ENCODE measurements at regions of chr13 and their contacts with region 1.

Region 1: GRCh38 chr13:21476893-21477472 is 17.9 kb upstream of the ZDHHC20 start:
- DNase-seq: peak; percentile 90
- ATAC-seq: peak; percentile 95
- H3K4me3 Mint-ChIP-seq: peak overlapping the region; percentile 79
- H3K27ac Mint-ChIP-seq: peak overlapping the region; percentile 79
- H3K4me1 Mint-ChIP-seq: peaks cover 7% of the 10 kb centered on the region
- H3K27me3 Mint-ChIP-seq: no peaks in the 10 kb centered on the region
- CTCF ChIP-seq: peak; percentile 92

Region 2: DNA sequence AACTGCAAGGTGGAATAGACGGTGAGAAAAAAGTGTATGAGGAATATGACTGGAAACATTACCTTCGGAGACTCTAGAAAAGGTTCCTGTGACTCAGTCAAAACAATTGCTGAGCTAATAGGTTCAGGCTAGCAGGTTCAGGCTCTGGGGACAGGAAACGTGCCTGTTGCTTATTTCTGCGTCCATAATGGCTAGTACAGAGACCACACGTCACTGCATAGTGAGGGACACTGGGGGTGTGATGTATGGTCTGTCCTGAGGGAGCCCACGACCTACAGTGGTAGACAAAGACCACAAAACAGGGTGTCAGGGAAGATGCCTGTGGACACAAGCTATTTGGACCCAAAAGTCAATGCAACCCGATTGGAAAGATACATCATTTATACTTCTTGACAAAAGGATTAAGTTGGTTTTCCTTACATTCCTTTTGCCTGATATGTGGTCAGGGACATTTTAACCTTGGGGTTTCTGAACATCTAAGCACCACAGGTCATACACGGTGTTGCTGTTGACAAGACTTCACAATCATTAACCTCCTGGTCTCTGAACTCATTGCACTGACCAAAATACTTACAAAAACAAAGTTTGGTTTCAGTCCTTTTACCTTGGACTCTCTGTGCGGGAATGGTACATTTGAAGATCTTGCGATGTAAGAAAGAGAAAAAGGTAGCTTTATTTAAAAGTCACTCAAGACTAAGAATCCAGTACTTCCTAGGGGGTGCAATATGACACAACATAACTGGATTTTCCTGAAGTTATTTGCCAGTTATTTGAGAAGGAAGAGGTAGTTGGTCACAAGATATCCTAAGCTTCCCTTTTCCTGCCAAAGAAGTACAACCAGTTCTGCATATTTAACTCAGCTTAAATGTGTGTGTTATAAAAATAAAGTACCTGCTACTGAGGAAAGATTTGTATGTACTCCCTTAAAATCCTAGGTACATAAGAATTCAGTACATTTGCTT is 971.3 kb before region 1 on chr13:
- CTCF ChIA-PET with region 1: no interaction called
- POLR2A ChIA-PET with region 1: no interaction called
- intact Hi-C with region 1: no loop called
- DNase-seq: no peak
- ATAC-seq: no peak
- H3K4me3 Mint-ChIP-seq: no peak overlapping the region
- H3K27ac Mint-ChIP-seq: no peak overlapping the region
- H3K4me1 Mint-ChIP-seq: no peaks in the 10 kb centered on the region
- H3K27me3 Mint-ChIP-seq: no peaks in the 10 kb centered on the region
- CTCF ChIP-seq: no peak

Region 3: DNA sequence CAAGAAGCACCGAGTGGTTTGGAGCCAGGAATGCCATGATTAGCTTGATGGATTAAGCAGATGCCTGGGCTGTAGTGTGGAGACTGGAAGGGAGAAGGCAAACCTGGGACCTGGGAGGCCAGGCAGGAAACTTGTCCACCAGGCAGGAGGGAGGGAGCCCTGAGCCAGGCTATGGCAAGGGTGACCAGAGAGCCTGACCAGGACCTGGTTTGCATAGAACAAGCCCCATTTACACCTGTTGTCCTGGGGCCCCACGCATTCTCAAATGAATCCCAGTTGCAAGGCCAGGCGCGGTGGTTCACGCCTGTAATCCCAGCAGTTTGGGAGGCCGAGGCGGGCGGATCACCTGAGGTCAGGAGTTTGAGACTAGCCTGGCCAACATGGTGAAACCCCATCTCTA is 365.4 kb before region 1 on chr13:
- CTCF ChIA-PET with region 1: interaction called, 4 read pairs
- POLR2A ChIA-PET with region 1: no interaction called
- intact Hi-C with region 1: loop called (anchors 5 kb)
- DNase-seq: no peak
- ATAC-seq: no peak
- H3K4me3 Mint-ChIP-seq: no peak overlapping the region
- H3K27ac Mint-ChIP-seq: no peak overlapping the region
- H3K4me1 Mint-ChIP-seq: no peaks in the 10 kb centered on the region
- H3K27me3 Mint-ChIP-seq: no peaks in the 10 kb centered on the region
- CTCF ChIP-seq: no peak

Region 4: DNA sequence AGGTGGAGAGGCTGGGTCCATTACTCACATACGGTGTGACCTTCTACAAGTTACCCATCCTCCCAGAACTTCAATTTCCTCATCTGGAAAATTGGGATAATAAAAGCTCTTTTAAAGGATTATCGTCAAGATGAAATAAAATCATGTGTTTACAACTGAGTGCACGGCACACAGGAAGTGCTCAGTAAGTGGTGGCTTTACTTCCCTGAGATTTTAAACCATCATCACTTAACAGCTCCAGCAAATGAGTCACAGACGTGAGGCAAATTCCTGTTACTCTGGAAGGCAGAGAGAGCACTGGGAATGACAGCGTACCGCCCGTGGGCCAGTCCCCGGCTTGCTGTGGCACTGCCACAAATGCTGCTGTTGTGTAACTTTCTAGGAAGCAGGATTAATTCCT is 236.4 kb before region 1 on chr13:
- CTCF ChIA-PET with region 1: interaction called, 10 read pairs
- POLR2A ChIA-PET with region 1: no interaction called
- intact Hi-C with region 1: no loop called
- DNase-seq: no peak
- ATAC-seq: no peak
- H3K4me3 Mint-ChIP-seq: no peak overlapping the region
- H3K27ac Mint-ChIP-seq: no peak overlapping the region
- H3K4me1 Mint-ChIP-seq: peaks cover 7% of the 10 kb centered on the region
- H3K27me3 Mint-ChIP-seq: no peaks in the 10 kb centered on the region
- CTCF ChIP-seq: no peak

Region 5: DNA sequence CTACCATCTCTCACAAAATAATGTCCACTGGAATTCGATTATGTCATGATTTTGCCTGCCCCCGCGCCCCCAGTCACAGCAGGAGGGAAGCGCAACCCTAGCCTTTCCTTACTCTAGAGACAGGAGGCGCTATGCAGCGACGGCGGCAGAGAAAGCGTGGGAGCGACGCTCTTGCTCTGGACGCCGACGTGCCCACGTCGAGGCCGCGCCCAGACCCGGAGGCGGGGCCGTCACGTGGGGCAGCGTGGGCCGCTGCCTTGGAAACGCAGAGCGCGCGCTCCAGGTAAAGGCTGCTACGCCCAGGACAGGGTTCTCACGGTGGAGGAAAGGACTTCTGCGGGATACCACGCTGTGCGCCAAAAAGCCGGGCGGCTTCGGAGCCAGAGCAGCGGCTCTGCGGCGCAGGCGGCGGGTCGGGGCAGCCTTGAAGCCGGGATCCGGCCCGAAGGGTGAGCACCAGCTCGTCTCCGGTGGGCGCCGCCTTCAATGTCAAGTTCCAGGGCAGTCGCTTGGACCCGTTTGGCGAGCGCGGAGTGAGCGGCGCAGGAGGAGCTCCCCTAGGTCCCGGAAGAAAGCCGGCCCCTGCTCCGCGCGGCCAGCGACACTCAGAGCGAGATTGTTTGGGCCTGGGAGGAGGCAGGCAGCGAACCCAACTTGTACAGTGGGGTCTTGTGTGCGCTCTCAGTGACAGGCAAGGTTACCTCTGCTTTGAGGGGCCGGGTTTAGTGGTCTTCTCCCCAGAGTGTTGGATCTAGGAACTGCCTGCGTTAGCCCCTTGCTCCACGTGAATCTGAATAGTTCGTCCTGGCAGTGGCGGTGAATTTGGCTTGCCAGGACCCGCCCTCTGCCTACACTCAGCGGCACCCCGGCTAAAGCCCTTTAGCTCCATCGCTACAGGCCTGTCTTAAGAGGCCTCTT is 178.8 kb before region 1 on chr13:
- CTCF ChIA-PET with region 1: interaction called, 95 read pairs
- POLR2A ChIA-PET with region 1: interaction called, 5 read pairs
- intact Hi-C with region 1: loop called (anchors 2 kb)
- DNase-seq: peak; percentile 87
- ATAC-seq: peak; percentile 93
- H3K4me3 Mint-ChIP-seq: peak overlapping the region; percentile 90
- H3K27ac Mint-ChIP-seq: peak overlapping the region; percentile 61
- H3K4me1 Mint-ChIP-seq: peaks cover 23% of the 10 kb centered on the region
- H3K27me3 Mint-ChIP-seq: no peaks in the 10 kb centered on the region
- CTCF ChIP-seq: peak; percentile 90

Region 6: GRCh38 chr13:21458813-21459701 is 17.9 kb before region 1 on chr13 and contains the start of gene ZDHHC20:
- CTCF ChIA-PET with region 1: interaction called, 50 read pairs
- POLR2A ChIA-PET with region 1: interaction called, 3 read pairs
- intact Hi-C with region 1: no loop called
- DNase-seq: peak; percentile 87
- ATAC-seq: peak; percentile 92
- H3K4me3 Mint-ChIP-seq: peak within 1 kb of the TSS; percentile 96
- H3K27ac Mint-ChIP-seq: peak within 1 kb of the TSS; percentile 94
- H3K4me1 Mint-ChIP-seq: peaks cover 24% of the 10 kb centered on the region
- H3K27me3 Mint-ChIP-seq: no peaks in the 10 kb centered on the region
- CTCF ChIP-seq: no peak
- total RNA-seq, gene ZDHHC20: 46.1 to 50.9 TPM

Region 7: GRCh38 chr13:21528621-21529020 is 51.6 kb after region 1 on chr13:
- CTCF ChIA-PET with region 1: no interaction called
- POLR2A ChIA-PET with region 1: no interaction called
- intact Hi-C with region 1: no loop called
- DNase-seq: no peak
- ATAC-seq: no peak
- H3K4me3 Mint-ChIP-seq: no peak overlapping the region
- H3K27ac Mint-ChIP-seq: no peak overlapping the region
- H3K4me1 Mint-ChIP-seq: peaks cover 12% of the 10 kb centered on the region
- H3K27me3 Mint-ChIP-seq: no peaks in the 10 kb centered on the region
- CTCF ChIP-seq: no peak

Region 8: DNA sequence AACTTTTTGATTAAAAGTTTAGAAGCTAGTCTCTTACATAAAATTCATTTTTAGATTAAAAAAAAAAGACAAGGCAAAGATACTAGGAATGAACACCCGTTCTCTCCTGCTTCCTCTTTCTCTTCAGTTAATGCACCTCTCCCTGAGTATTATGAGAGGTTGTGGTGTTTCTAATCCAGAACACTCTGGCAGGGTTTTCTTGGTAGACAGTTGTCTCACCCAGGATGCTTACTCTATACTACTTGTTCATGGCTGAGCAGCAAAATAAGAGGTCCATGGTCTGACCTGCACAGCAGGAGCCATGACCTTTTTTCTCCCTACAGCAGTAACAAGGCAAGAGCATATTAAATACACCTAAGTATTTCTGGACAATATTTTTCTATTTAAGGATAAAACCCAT is 65.0 kb after region 1 on chr13:
- CTCF ChIA-PET with region 1: no interaction called
- POLR2A ChIA-PET with region 1: no interaction called
- intact Hi-C with region 1: no loop called
- DNase-seq: no peak
- ATAC-seq: no peak
- H3K4me3 Mint-ChIP-seq: no peak overlapping the region
- H3K27ac Mint-ChIP-seq: no peak overlapping the region
- H3K4me1 Mint-ChIP-seq: peaks cover 41% of the 10 kb centered on the region
- H3K27me3 Mint-ChIP-seq: no peaks in the 10 kb centered on the region
- CTCF ChIP-seq: no peak